ENCODE measurements at regions of chr4 and their contacts with region 1.

Region 1: DNA sequence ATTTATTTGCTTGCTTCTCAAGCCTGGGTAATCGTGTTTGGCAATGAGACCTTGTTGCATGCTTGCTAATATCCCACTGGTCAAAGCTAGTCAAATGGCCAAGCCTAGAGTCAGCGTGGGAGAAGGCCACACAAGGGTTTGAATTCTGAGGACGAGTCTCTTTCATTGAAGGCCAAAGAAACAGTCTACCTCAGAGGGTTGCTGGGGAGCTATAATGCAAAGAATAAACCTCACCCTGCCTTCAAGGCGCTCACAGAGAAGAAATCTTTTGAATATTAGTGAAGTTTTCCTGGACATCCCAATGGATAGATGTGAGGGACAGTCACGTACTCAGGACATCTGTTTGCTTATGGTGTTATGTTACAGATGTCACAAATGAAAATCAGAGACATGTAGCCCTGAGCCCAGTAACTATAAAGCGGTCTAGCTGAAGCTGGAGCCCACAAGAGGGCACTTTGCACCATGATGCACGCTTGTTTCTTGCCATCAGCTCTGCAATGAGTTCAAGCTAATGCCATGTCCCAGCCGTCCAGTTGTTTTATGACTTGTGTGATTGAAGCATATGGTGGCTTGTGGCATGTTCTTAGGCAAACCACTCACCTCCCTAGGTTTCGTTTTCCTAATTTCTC is 1.1 kb upstream of the TLR3 start:
- DNase-seq: peak; percentile 80
- H3K4me3 ChIP-seq: peak overlapping the region; percentile 29 to 44
- H3K27ac ChIP-seq: peak overlapping the region in 1 of 2 donors; percentile 68
- H3K4me1 ChIP-seq: no peaks in the 10 kb centered on the region
- H3K27me3 ChIP-seq: no peaks in the 10 kb centered on the region
- CTCF ChIP-seq: peak in 3 of 4 experiments; percentile 61 to 70 (median 67)
- POLR2A ChIP-seq: no peak

Region 2: GRCh38 chr4:186037692-186038658 is 29.9 kb before region 1 on chr4:
- intact Hi-C with region 1: no loop called
- DNase-seq: peak; percentile 67
- H3K4me3 ChIP-seq: no peak overlapping the region
- H3K27ac ChIP-seq: no peak overlapping the region
- H3K4me1 ChIP-seq: peaks cover under 1% of the 10 kb centered on the region
- H3K27me3 ChIP-seq: no peaks in the 10 kb centered on the region
- CTCF ChIP-seq: peak; percentile 74 to 88 (median 82)
- POLR2A ChIP-seq: no peak

Region 3: DNA sequence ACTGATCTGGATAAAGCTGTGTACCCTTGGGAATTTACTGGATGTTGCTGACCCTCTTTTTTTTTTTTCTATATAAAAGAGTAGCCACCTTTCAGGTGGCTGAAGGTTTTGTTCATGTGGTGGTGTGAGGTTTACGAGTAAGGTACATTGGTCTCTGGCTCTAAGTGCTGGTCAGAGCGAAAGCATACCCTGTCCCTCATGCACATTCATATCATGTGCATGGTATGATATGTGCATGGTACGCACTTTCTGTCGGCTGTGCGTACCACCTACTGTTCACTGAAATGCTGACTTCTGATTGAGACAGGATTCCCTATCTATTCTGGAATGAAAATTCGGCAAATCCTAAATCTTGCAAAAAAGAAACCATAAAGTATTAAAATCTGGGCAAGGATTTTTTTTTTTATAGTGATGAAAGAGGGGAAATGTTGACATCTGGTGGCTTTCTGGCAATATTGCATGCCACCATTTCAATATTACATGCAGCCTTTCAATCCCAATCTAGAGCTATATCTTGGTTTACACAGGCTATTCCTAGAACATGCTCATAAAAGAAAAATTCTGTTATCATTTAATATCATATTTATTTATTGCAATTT is 69.4 kb after region 1 on chr4:
- intact Hi-C with region 1: loop called (anchors 2 kb)
- DNase-seq: no peak
- H3K4me3 ChIP-seq: no peak overlapping the region
- H3K27ac ChIP-seq: no peak overlapping the region
- H3K4me1 ChIP-seq: no peaks in the 10 kb centered on the region
- H3K27me3 ChIP-seq: no peaks in the 10 kb centered on the region
- CTCF ChIP-seq: peak; percentile 32 to 80 (median 68)
- POLR2A ChIP-seq: no peak

Region 4: GRCh38 chr4:186201535-186202230 is 133.8 kb after region 1 on chr4:
- intact Hi-C with region 1: loop called (anchors 5 kb)
- DNase-seq: no peak
- H3K4me3 ChIP-seq: no peak overlapping the region
- H3K27ac ChIP-seq: no peak overlapping the region
- H3K4me1 ChIP-seq: no peaks in the 10 kb centered on the region
- H3K27me3 ChIP-seq: no peaks in the 10 kb centered on the region
- CTCF ChIP-seq: peak; percentile 18 to 59 (median 46)
- POLR2A ChIP-seq: no peak

Region 5: GRCh38 chr4:186297013-186297645 is 229.3 kb after region 1 on chr4:
- intact Hi-C with region 1: no loop called
- DNase-seq: peak; percentile 8
- H3K4me3 ChIP-seq: no peak overlapping the region
- H3K27ac ChIP-seq: no peak overlapping the region
- H3K4me1 ChIP-seq: no peaks in the 10 kb centered on the region
- H3K27me3 ChIP-seq: no peaks in the 10 kb centered on the region
- CTCF ChIP-seq: peak; percentile 30 to 72 (median 60)
- POLR2A ChIP-seq: no peak

Measured in prostate gland (tissue), 2 donors.